HepG2 (cell line): ENCODE measurements at regions of chr17 and their contacts with region 1.

Region 1: DNA sequence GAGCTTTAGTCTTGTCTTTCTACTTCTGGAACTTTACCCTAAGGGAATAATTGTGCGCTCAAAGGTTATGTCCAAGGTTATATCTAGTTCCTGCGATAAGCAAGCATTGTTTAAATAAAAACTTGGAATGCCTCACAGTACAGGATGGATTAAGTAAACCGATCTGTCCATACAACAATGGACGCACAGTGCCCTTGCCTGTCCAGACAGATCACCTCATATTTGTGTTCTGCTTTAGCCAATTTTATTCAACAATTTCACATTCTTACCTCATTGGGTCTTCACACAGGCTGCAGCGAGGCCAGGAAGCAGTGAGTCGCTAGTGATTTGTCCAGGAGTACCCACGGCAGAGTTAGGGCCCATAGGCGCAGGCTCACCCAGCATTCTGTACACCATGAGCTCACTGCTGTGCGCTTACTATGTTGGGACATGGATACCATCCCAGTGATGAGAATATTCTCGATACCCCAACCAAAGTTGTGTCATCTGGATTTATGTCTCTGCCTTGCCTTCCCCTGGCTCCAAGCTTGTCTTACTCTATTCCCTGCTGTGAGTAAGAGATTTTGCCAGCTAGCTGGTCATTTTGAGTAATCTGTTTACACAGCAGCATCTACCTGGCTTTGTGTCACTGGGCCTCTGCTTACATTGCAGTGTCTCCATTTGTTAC is 39.8 kb downstream of the USP43 start:
- DNase-seq: peak; percentile 92
- ATAC-seq: peak; percentile 98
- H3K4me3 ChIP-seq: peak overlapping the region; percentile 13 to 47 (median 13); a peak in 3 of 6 replicates
- H3K27ac ChIP-seq: peak overlapping the region; percentile 52
- H3K4me1 ChIP-seq: peaks cover 20% of the 10 kb centered on the region
- H3K27me3 ChIP-seq: no peaks in the 10 kb centered on the region
- CTCF ChIP-seq: no peak
- EP300 ChIP-seq: peak in 1 of 2 experiments; percentile 64; a peak in 2 of 4 replicates
- POLR2A ChIP-seq: no peak
- RAD21 ChIP-seq: no peak

Region 2: GRCh38 chr17:9644910-9645751 is 40.0 kb before region 1 on chr17 and contains the start of gene USP43:
- CTCF ChIA-PET with region 1: no interaction called
- POLR2A ChIA-PET with region 1: interaction called, 7 read pairs
- in situ Hi-C with region 1: no loop called
- intact Hi-C with region 1: loop called (anchors 1 kb)
- DNase-seq: peak; percentile 6
- ATAC-seq: peak; percentile 66
- H3K4me3 ChIP-seq: peak within 1 kb of the TSS; percentile 48 to 84 (median 62)
- H3K27ac ChIP-seq: peak within 1 kb of the TSS; percentile 61
- H3K4me1 ChIP-seq: peaks cover 47% of the 10 kb centered on the region
- H3K27me3 ChIP-seq: peaks cover 0 to 6% of the 10 kb centered on the region in 2 experiments; a peak in 2 of 5 replicates
- CTCF ChIP-seq: no peak
- EP300 ChIP-seq: 0 out of 4 replicates have a peak, but pooled peaks of 1 of the 2 experiments have one; percentile 3
- POLR2A ChIP-seq: peak in 1 of 2 experiments; percentile 33; a peak in 1 of 4 replicates
- RAD21 ChIP-seq: no peak
- total RNA-seq, gene USP43: 1.3 and 2.2 TPM in 2 replicates

Region 3: GRCh38 chr17:11459861-11460331 is 1774.8 kb after region 1 on chr17:
- CTCF ChIA-PET with region 1: no interaction called
- POLR2A ChIA-PET with region 1: no interaction called
- in situ Hi-C with region 1: no loop called
- intact Hi-C with region 1: no loop called
- DNase-seq: no peak
- ATAC-seq: no peak
- H3K4me3 ChIP-seq: no peak overlapping the region
- H3K27ac ChIP-seq: no peak overlapping the region
- H3K4me1 ChIP-seq: no peaks in the 10 kb centered on the region
- H3K27me3 ChIP-seq: peaks cover 0 to 14% of the 10 kb centered on the region in 2 experiments; a peak in 1 of 5 replicates
- CTCF ChIP-seq: no peak
- EP300 ChIP-seq: no peak
- POLR2A ChIP-seq: no peak
- RAD21 ChIP-seq: no peak